AG04449 (cell line): ENCODE measurements at regions of chr6 and their contacts with region 1.

Region 1: GRCh38 chr6:35452186-35453090 is at the start of gene FANCE:
- DNase-seq: no peak
- H3K4me3 ChIP-seq: peak within 1 kb of the TSS; percentile 77
- CTCF ChIP-seq: no peak

Region 2: DNA sequence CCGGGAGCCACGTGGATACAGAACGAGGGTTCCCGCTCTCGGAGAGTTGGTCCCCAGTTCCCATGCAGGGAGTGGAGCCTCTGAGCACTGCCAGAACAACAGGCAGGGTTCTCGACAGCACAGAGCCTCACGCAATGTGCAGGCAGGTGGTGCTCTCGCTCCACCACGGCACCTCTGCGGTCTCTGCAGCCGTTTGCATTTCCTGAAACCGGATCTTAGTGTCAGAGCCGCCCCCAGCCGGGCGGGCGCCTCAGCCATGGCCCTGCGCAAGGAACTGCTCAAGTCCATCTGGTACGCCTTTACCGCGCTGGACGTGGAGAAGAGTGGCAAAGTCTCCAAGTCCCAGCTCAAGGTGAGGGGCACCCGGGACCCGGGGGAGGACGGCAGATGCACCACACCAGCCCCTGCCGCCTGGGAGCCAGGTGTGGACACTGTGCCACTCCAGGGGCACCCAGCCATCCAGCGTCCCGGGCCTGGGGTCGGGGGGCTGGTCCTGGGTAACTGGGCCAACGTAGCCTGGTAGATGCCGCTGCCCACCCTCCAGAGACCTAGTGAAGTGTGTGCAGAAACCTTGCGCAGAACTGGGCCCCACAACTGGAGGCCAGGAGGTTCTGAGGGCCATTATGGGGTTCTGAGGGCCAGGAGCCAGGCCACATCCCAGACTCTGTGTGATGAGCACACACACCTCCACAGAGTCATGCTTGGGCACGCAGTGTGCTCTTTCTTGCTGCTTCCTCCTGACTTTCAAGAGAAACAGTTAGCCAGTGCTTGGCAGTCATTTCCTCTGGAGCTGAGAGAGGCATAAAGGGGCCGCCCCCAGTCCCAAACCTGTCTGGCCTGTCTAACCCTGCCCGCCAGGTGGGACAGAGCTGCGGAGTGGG is 154.6 kb before region 1 on chr6 and contains the start of gene DEF6:
- CTCF ChIA-PET with region 1: interaction called, 80 read pairs
- POLR2A ChIA-PET with region 1: no interaction called
- DNase-seq: peak; percentile 17
- H3K4me3 ChIP-seq: peak within 1 kb of the TSS; percentile 55
- CTCF ChIP-seq: peak; percentile 80

Region 3: DNA sequence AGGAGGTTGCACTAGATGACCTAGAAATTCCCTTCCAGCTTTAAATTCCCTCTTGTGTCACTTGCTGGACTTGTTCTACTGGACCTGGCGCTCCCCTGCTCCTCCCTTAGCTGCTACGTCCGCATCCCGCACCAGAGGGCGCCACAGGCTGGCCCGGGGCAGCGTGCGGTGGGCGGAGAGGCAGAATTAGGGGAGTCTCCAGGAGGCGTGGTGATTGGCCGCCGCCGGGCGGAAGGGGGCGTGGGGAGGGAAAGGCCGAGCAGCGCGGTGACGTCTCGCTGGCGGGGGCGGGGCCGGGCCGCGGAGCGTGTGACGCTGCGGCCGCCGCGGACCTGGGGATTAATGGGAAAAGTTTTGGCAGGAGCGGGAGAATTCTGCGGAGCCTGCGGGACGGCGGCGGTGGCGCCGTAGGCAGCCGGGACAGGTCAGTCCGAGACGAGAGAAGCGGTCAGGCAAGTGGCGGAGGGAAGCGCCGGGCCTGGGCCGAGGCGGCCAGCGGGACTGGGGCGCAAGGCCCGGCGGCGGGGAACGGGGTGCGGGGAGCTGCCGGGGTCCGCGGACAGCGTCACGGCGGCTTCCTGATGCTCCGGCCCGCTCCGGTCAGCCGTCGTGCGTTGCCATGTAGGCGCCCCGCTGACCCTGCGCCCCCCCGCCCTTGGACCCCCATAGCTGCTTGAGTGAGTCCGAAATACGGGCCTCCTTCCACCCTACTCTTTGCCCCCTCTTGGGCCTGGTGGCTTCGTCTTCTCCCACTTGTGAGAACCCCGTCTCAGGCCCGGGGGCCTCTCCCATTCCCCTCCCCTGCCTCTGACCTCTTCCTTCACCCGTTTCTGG is 110.0 kb before region 1 on chr6 and contains the start of gene PPARD:
- CTCF ChIA-PET with region 1: interaction called, 430 read pairs
- POLR2A ChIA-PET with region 1: interaction called, 7 read pairs
- DNase-seq: peak; percentile 38
- H3K4me3 ChIP-seq: peak within 1 kb of the TSS; percentile 84
- CTCF ChIP-seq: peak; percentile 100

Region 4: DNA sequence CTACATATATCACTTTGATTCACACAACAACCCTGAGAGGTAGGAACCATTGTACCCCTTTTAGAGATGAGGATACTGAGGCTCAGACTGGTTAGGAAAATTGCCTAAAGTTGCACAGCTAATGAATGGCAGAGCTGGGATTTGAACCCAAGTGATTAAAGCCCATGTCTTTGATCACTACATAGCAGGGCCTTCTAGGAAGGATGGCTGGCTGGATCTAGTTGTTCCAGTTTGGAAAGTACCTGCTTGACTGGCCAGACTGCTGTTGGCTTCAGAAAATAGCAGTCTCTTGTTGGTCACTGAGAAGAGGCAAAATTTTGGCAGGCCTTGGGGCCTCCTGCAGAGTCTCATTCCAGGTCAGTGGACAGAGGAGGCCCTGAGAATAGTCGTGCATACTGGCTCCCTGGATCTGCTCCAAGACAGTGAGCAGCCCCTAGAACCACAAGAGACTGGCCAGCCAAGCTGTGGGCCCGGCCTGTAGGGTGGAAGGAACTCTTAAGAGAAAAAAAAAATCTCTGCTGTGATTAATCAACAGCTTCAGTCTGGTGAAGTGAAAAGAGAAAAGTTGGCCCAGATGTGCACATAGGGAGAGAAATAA is 92.6 kb before region 1 on chr6:
- CTCF ChIA-PET with region 1: interaction called, 22 read pairs
- POLR2A ChIA-PET with region 1: no interaction called
- DNase-seq: peak; percentile 73
- H3K4me3 ChIP-seq: no peak overlapping the region
- CTCF ChIP-seq: no peak

Region 5: GRCh38 chr6:35402136-35402855 is 50.1 kb before region 1 on chr6:
- CTCF ChIA-PET with region 1: interaction called, 349 read pairs
- POLR2A ChIA-PET with region 1: no interaction called
- DNase-seq: no peak
- H3K4me3 ChIP-seq: no peak overlapping the region
- CTCF ChIP-seq: no peak

Region 6: DNA sequence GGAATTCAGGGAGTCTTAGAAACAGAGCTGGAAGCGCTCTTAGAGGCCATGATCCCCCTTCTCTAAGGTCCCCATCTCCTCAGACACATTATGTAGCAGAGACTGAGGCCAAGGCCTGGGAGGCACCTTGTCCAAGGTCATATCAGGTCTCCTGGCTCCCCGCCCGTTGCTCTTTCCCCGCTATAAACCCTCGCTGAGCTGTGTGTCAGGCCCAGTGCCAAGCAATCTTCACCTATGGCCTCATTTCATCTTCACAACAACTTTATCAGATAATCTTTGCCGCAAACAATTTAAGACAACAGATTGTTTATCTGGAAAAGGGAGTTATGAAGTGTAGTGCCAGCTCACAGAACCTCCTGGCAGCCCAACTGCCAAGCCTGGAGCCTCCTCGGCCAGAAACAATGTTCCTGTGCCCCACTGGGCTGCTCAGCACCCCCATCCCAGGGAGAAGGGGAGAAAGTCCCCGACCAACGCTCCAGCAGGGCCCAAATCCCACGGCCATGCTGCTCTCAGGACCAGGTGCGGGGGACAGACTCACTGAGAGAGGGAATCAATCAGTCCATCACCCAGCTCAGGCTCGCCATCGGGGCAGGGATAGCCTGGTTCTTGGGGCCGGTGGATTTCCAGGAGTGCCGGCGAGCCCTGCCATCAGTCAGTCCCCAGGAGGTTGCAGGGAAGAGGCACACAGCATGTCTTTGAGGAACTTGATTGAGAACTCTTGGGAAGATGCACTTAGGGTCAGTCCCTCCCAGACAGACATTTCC is 17.2 kb before region 1 on chr6:
- CTCF ChIA-PET with region 1: interaction called, 349 read pairs
- POLR2A ChIA-PET with region 1: no interaction called
- DNase-seq: no peak
- H3K4me3 ChIP-seq: no peak overlapping the region
- CTCF ChIP-seq: no peak

Region 7: GRCh38 chr6:35552285-35552917 is 100.0 kb after region 1 on chr6:
- CTCF ChIA-PET with region 1: no interaction called
- POLR2A ChIA-PET with region 1: no interaction called
- DNase-seq: no peak
- H3K4me3 ChIP-seq: no peak overlapping the region
- CTCF ChIP-seq: peak; percentile 57